IMR-90 (cell line): ENCODE measurements at regions of chr14 and their contacts with region 1.

Region 1: DNA sequence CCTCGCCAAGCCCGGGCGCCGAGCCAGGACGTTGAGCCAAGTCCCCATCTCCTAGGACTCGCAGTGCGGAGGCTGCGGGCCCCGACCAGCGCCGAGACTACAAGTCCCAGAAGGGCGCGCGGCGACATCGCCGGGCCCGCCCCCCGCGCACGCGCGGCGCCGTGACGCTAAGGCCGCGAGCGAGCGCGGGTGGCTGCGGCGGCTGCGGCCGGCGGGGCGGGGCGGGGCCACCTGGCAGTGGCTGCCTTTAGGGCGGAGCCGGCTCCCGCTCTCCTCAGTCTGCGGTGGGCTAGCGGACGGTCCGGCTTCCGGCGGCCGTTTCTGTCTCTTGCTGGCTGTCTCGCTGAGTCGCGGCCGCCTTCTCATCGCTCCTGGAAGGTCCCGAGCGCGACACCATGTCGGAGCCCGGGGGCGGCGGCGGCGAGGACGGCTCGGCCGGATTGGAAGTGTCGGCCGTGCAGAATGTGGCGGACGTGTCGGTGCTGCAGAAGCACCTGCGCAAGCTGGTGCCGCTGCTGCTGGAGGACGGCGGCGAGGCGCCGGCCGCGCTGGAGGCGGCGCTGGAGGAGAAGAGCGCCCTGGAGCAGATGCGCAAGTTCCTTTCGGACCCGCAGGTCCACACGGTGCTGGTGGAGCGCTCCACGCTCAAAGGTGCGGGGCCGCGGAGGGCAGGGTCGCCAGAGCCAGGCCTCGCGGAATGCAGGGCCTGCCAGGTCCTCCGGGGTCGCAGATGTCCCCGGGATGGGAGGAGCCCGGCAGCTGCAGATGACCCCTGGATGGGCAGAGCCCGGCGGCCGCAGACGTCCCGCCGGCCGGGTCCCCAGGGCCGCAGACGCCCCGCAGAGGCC is at the start of gene DYNC1H1:
- DNase-seq: peak; percentile 94
- ATAC-seq: peak; percentile 86
- H3K4me3 ChIP-seq: peak within 1 kb of the TSS; percentile 99
- H3K27ac ChIP-seq: peak within 1 kb of the TSS; percentile 95
- H3K4me1 ChIP-seq: peaks cover 11% of the 10 kb centered on the region
- H3K27me3 ChIP-seq: no peaks in the 10 kb centered on the region
- CTCF ChIP-seq: no peak
- POLR2A ChIP-seq: peak; percentile 97
- RAD21 ChIP-seq: no peak
- total RNA-seq, gene DYNC1H1: 612 and 670 TPM in 2 replicates

Region 2: GRCh38 chr14:101767618-101768362 is 196.7 kb before region 1 on chr14:
- CTCF ChIA-PET with region 1: interaction called, 3 read pairs
- POLR2A ChIA-PET with region 1: no interaction called
- dilution Hi-C with region 1: no loop called
- in situ Hi-C with region 1: loop called (anchors 5 kb)
- intact Hi-C with region 1: loop called (anchors 5 kb)
- DNase-seq: no peak
- ATAC-seq: no peak
- H3K4me3 ChIP-seq: no peak overlapping the region
- H3K27ac ChIP-seq: no peak overlapping the region
- H3K4me1 ChIP-seq: no peaks in the 10 kb centered on the region; the same call in 1 of the 2 replicates
- H3K27me3 ChIP-seq: no peaks in the 10 kb centered on the region
- CTCF ChIP-seq: no peak
- POLR2A ChIP-seq: no peak
- RAD21 ChIP-seq: no peak

Region 3: GRCh38 chr14:101980251-101981099 is 16.0 kb after region 1 on chr14:
- CTCF ChIA-PET with region 1: no interaction called
- POLR2A ChIA-PET with region 1: no interaction called
- dilution Hi-C with region 1: no loop called
- in situ Hi-C with region 1: no loop called
- intact Hi-C with region 1: loop called (anchors 1 kb)
- DNase-seq: peak; percentile 99
- ATAC-seq: peak; percentile 91
- H3K4me3 ChIP-seq: no peak overlapping the region
- H3K27ac ChIP-seq: peak overlapping the region; percentile 82
- H3K4me1 ChIP-seq: peaks cover 8% of the 10 kb centered on the region
- H3K27me3 ChIP-seq: no peaks in the 10 kb centered on the region
- CTCF ChIP-seq: no peak
- POLR2A ChIP-seq: no peak
- RAD21 ChIP-seq: 0 out of 2 replicates have a peak, but pooled peaks have one; percentile 6

Region 4: DNA sequence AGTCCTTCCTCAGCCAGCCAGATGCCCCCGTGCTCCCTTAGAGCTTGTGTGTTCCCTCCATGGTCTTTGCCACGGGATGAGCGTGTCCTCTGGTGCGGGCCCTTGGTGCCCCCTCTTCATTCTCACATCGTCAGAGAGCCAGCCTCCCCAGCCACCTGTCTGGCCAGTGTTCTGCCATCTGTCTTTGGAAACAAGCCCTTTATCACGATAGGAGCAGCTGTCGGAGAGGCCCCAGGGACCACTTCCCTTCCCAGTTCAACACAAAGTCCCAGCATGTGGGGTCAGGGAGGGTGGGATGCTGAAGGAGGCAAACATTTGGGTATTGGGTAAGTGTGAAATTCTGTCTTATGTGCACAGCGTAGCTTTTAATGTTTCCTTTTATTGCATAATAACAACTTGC is 44.4 kb after region 1 on chr14:
- CTCF ChIA-PET with region 1: no interaction called
- POLR2A ChIA-PET with region 1: no interaction called
- dilution Hi-C with region 1: no loop called
- in situ Hi-C with region 1: no loop called
- intact Hi-C with region 1: no loop called
- DNase-seq: no peak
- ATAC-seq: no peak
- H3K4me3 ChIP-seq: no peak overlapping the region
- H3K27ac ChIP-seq: no peak overlapping the region
- H3K4me1 ChIP-seq: no peaks in the 10 kb centered on the region
- H3K27me3 ChIP-seq: no peaks in the 10 kb centered on the region
- CTCF ChIP-seq: no peak
- POLR2A ChIP-seq: no peak
- RAD21 ChIP-seq: no peak

Region 5: GRCh38 chr14:102096214-102097114 is 131.9 kb after region 1 on chr14:
- CTCF ChIA-PET with region 1: interaction called, 5 read pairs
- POLR2A ChIA-PET with region 1: no interaction called
- dilution Hi-C with region 1: no loop called
- in situ Hi-C with region 1: no loop called
- intact Hi-C with region 1: loop called (anchors 1 kb)
- DNase-seq: peak; percentile 74
- ATAC-seq: peak; percentile 86
- H3K4me3 ChIP-seq: no peak overlapping the region
- H3K27ac ChIP-seq: no peak overlapping the region
- H3K4me1 ChIP-seq: peaks cover 12% of the 10 kb centered on the region
- H3K27me3 ChIP-seq: no peaks in the 10 kb centered on the region
- CTCF ChIP-seq: peak; percentile 92
- POLR2A ChIP-seq: no peak
- RAD21 ChIP-seq: peak; percentile 91